HepG2 (cell line): ENCODE measurements at regions of chr10 and their contacts with region 1.

Region 1: GRCh38 chr10:44974628-44975431 is 3.8 kb downstream of the DEPP1 start:
- DNase-seq: peak; percentile 79
- ATAC-seq: peak; percentile 58
- H3K4me3 ChIP-seq: peak overlapping the region in 2 of 3 experiments; percentile 21 to 52; a peak in 2 of 6 replicates
- H3K27ac ChIP-seq: peak overlapping the region; percentile 53
- H3K4me1 ChIP-seq: peaks cover 47% of the 10 kb centered on the region
- H3K27me3 ChIP-seq: no peaks in the 10 kb centered on the region; a peak in 1 of 5 replicates
- CTCF ChIP-seq: peak; percentile 84
- EP300 ChIP-seq: peak in 1 of 2 experiments; percentile 33; a peak in 1 of 4 replicates
- POLR2A ChIP-seq: peak in 1 of 2 experiments; percentile 27; a peak in 1 of 4 replicates
- RAD21 ChIP-seq: peak; percentile 97

Region 2: DNA sequence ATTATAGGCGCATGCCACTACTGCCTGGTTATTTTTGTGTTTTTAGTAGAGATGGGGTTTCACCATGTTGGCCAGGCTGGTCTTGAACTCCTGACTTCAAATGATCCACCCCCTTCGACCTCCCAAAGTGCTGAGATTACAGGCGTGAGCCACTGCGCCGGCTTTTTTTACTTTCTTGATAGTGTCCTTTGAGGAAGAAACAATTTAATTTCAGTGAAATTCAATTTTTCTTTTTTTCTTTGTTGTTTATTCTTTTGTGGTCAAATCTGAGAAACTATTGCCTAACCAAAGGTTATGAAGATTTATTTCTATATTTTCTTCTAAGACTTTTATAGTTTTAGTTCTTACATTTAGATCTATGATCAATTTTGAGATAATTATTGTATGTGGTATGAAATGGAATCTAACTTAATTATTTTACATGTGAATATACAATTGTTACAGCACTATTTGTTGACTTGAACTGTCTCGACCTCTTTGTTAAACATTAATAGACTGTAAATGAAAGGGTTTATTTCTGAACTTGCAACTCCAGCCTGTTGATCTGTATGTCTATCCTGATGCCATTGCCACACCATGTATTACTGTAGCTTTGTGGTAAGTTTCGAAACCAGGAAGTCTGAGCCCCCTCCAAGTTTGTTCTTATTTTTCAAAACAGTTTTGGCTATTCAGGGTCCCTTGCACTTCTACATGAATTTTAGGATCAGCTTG is 35.0 kb before region 1 on chr10:
- CTCF ChIA-PET with region 1: interaction called, 8 read pairs
- POLR2A ChIA-PET with region 1: interaction called, 215 read pairs
- in situ Hi-C with region 1: no loop called
- intact Hi-C with region 1: no loop called
- DNase-seq: peak; percentile 93
- ATAC-seq: peak; percentile 79
- H3K4me3 ChIP-seq: no peak overlapping the region; a peak in 1 of 6 replicates
- H3K27ac ChIP-seq: peak overlapping the region; percentile 61
- H3K4me1 ChIP-seq: peaks cover 59% of the 10 kb centered on the region
- H3K27me3 ChIP-seq: no peaks in the 10 kb centered on the region
- CTCF ChIP-seq: no peak
- EP300 ChIP-seq: peak in 1 of 2 experiments; percentile 91; a peak in 2 of 4 replicates
- POLR2A ChIP-seq: no peak
- RAD21 ChIP-seq: no peak

Region 3: GRCh38 chr10:44952779-44953231 is 22.0 kb before region 1 on chr10:
- CTCF ChIA-PET with region 1: interaction called, 5 read pairs
- POLR2A ChIA-PET with region 1: interaction called, 407 read pairs
- in situ Hi-C with region 1: no loop called
- intact Hi-C with region 1: no loop called
- DNase-seq: peak; percentile 92
- ATAC-seq: peak; percentile 75
- H3K4me3 ChIP-seq: no peak overlapping the region
- H3K27ac ChIP-seq: peak overlapping the region; percentile 50
- H3K4me1 ChIP-seq: peaks cover 80% of the 10 kb centered on the region
- H3K27me3 ChIP-seq: no peaks in the 10 kb centered on the region
- CTCF ChIP-seq: no peak
- EP300 ChIP-seq: peak in 1 of 2 experiments; percentile 79; a peak in 1 of 4 replicates
- POLR2A ChIP-seq: 0 out of 4 replicates have a peak, but pooled peaks of 1 of the 2 experiments have one; percentile 24
- RAD21 ChIP-seq: no peak

Region 4: DNA sequence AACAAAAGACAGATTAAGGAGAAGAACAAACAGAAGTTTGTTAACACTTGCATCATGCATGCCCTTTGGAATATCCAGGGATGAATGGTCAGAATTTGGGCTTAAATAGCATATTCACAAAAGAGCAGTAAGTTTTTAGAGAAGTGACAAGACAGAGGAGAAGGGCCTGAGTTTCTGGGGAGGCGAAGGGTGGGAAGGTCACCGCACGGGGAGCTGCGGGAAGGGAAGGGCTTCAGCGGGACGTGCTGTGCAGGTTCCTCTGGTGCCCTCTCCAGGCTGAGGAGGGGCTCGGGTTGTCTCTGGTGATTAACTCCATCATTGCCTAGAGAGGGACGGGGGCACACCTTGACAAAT is 15.4 kb after region 1 on chr10:
- CTCF ChIA-PET with region 1: no interaction called
- POLR2A ChIA-PET with region 1: interaction called, 863 read pairs
- in situ Hi-C with region 1: no loop called
- intact Hi-C with region 1: no loop called
- DNase-seq: peak; percentile 71
- ATAC-seq: peak; percentile 86
- H3K4me3 ChIP-seq: 0 out of 6 replicates have a peak overlapping the region, but pooled peaks of 1 of the 3 experiments have one; percentile 0
- H3K27ac ChIP-seq: peak overlapping the region; percentile 55
- H3K4me1 ChIP-seq: peaks cover 75% of the 10 kb centered on the region
- H3K27me3 ChIP-seq: no peaks in the 10 kb centered on the region
- CTCF ChIP-seq: peak; percentile 78
- EP300 ChIP-seq: peak in 1 of 2 experiments; percentile 88; a peak in 2 of 4 replicates
- POLR2A ChIP-seq: no peak
- RAD21 ChIP-seq: peak; percentile 81

Region 5: GRCh38 chr10:45008524-45009161 is 33.8 kb after region 1 on chr10:
- CTCF ChIA-PET with region 1: no interaction called
- POLR2A ChIA-PET with region 1: interaction called, 119 read pairs
- in situ Hi-C with region 1: no loop called
- intact Hi-C with region 1: no loop called
- DNase-seq: peak; percentile 88
- ATAC-seq: peak; percentile 81
- H3K4me3 ChIP-seq: no peak overlapping the region
- H3K27ac ChIP-seq: no peak overlapping the region
- H3K4me1 ChIP-seq: peaks cover 44% of the 10 kb centered on the region
- H3K27me3 ChIP-seq: no peaks in the 10 kb centered on the region
- CTCF ChIP-seq: peak; percentile 87
- EP300 ChIP-seq: no peak
- POLR2A ChIP-seq: no peak
- RAD21 ChIP-seq: peak; percentile 83